ENCODE measurements at regions of chrX and their contacts with region 1.

Region 1: DNA sequence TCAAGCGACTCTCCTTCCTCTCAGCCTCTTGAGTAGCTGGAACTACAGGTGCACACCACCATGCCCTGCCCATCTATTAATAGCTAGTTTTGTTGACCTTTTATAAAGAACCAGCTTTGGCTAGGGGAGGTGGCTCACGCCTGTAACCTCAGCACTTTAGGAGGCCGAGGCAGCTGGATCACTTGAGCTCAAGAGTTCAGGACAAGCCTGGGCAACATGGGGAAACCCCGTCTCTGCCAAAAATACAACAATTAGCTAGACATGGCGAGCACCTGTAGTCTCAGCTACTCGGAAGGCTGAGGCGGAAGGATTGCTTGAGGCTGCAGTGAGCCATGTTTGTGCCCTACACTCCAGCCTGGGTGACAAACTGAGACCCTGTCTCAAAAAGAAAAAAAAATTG is 2.7 kb downstream of the TKTL1 start:
- DNase-seq: no peak
- ATAC-seq: no peak
- H3K4me3 ChIP-seq: no peak overlapping the region
- H3K27ac ChIP-seq: no peak overlapping the region
- H3K4me1 ChIP-seq: no peaks in the 10 kb centered on the region
- CTCF ChIP-seq: no peak
- EP300 ChIP-seq: no peak
- POLR2A ChIP-seq: no peak
- RAD21 ChIP-seq: no peak

Region 2: DNA sequence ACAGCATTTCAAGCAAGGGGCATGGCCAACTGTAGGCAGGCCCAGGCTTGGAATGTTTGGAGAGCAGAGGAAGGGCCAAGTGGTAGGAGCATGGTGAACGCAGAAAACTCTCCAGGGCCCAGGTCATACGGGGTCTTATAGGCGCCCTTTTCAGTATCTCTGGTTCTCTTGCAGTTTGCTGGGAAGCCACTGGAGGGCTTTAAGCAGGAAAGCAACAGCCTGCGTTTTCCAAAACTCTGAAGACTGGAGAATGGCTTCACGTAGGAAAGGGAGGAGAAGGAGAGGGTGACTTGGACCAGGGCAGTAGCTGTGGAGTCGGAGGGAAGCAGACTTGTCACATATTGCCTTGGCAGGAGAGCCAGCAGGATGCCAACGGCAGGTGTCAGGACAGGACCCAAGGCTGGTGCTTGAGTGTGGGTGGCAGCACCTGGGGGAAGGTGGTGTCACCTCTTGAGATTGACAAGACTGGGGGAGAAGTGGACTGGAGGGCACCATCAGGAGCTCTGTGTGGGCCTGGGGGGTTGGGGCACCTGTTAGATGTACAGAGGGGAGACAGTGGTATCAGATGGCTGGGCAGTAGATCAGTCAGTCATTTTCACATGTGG is 19.2 kb after region 1 on chrX:
- CTCF ChIA-PET with region 1: interaction called, 10 read pairs
- POLR2A ChIA-PET with region 1: no interaction called
- DNase-seq: peak; percentile 39 to 44
- ATAC-seq: peak; percentile 84 to 91; a peak in 5 of 6 replicates
- H3K4me3 ChIP-seq: no peak overlapping the region
- H3K27ac ChIP-seq: no peak overlapping the region
- H3K4me1 ChIP-seq: no peaks in the 10 kb centered on the region
- CTCF ChIP-seq: no peak; the same call in 2 of the 3 replicates
- EP300 ChIP-seq: no peak
- POLR2A ChIP-seq: no peak
- RAD21 ChIP-seq: no peak